Naive thymus-derived CD4-positive, alpha-beta T cell (primary cell): ENCODE measurements at regions of chr4 and their contacts with region 1.

Region 1: GRCh38 chr4:55554453-55555030 is 7.8 kb upstream of the CLOCK start:
- DNase-seq: peak in 5 of 9 donors; percentile 10 to 46 (median 36)
- ATAC-seq: peak; percentile 48
- H3K4me3 ChIP-seq: no peak overlapping the region
- H3K4me3 Mint-ChIP-seq: no peak overlapping the region
- H3K27ac ChIP-seq: no peak overlapping the region
- H3K27ac Mint-ChIP-seq: no peak overlapping the region
- H3K4me1 ChIP-seq: no peaks in the 10 kb centered on the region
- H3K4me1 Mint-ChIP-seq: peaks cover 0 to 10% (median 6%) of the 10 kb centered on the region in 7 donors
- H3K27me3 ChIP-seq: no peaks in the 10 kb centered on the region
- H3K27me3 Mint-ChIP-seq: peaks cover 0 to 15% (median 11%) of the 10 kb centered on the region in 5 donors

Region 2: DNA sequence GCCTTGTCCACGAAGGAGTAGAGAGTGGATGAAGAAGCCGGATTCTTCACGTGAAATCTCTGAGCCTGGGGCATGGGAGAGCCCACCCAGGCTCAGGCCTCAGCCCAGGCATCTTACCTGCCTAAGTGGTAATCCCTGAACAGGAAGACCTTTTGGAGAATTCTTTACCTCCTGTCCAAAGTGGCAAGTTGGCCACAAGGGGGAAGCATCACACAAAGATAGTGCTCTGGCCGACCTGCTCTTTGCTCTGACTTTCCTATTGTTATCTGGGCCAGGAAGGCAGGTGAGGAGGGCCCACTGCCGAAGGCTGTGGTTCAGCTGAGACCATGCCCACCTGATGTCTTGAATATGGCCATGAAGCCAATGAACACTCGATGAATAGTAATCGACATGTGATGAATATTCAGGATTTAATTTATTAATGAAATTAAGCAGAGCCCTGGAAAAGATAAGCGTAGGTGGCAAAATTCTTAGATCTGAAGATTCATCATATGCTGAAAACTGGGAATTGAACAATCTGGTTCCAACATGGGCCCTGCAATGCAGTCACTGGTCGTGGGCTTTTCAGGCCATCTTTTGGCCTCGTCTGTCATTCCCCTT is 1231.6 kb before region 1 on chr4:
- CTCF ChIA-PET with region 1: no interaction called
- POLR2A ChIA-PET with region 1: no interaction called
- intact Hi-C with region 1: loop called in 1 of 2 experiments (anchors 2 kb)
- DNase-seq: peak in 8 of 9 donors; percentile 8 to 52 (median 42)
- ATAC-seq: peak; percentile 54
- H3K4me3 ChIP-seq: no peak overlapping the region
- H3K4me3 Mint-ChIP-seq: no peak overlapping the region
- H3K27ac ChIP-seq: no peak overlapping the region
- H3K27ac Mint-ChIP-seq: no peak overlapping the region
- H3K4me1 ChIP-seq: no peaks in the 10 kb centered on the region
- H3K4me1 Mint-ChIP-seq: peaks cover 0 to 12% (median 0%) of the 10 kb centered on the region in 7 donors
- H3K27me3 ChIP-seq: no peaks in the 10 kb centered on the region
- H3K27me3 Mint-ChIP-seq: peaks cover 0 to 3% (median 0%) of the 10 kb centered on the region in 5 donors

Region 3: GRCh38 chr4:55312489-55313101 is 241.9 kb before region 1 on chr4:
- CTCF ChIA-PET with region 1: interaction called, 6 read pairs
- POLR2A ChIA-PET with region 1: no interaction called
- intact Hi-C with region 1: loop called (anchors 1 kb)
- DNase-seq: peak in 7 of 9 donors; percentile 6 to 34 (median 30)
- ATAC-seq: peak; percentile 68
- H3K4me3 ChIP-seq: no peak overlapping the region
- H3K4me3 Mint-ChIP-seq: no peak overlapping the region
- H3K27ac ChIP-seq: no peak overlapping the region
- H3K27ac Mint-ChIP-seq: no peak overlapping the region
- H3K4me1 ChIP-seq: no peaks in the 10 kb centered on the region
- H3K4me1 Mint-ChIP-seq: peaks cover 0 to 4% (median 0%) of the 10 kb centered on the region in 7 donors
- H3K27me3 ChIP-seq: no peaks in the 10 kb centered on the region
- H3K27me3 Mint-ChIP-seq: peaks cover 0 to 7% (median 0%) of the 10 kb centered on the region in 5 donors

Region 4: GRCh38 chr4:55358668-55359067 is 195.9 kb before region 1 on chr4:
- CTCF ChIA-PET with region 1: no interaction called
- POLR2A ChIA-PET with region 1: no interaction called
- intact Hi-C with region 1: loop called in 1 of 2 experiments (anchors 1 kb)
- DNase-seq: no peak
- ATAC-seq: peak; percentile 57
- H3K4me3 ChIP-seq: no peak overlapping the region
- H3K4me3 Mint-ChIP-seq: no peak overlapping the region
- H3K27ac ChIP-seq: no peak overlapping the region
- H3K27ac Mint-ChIP-seq: no peak overlapping the region
- H3K4me1 ChIP-seq: no peaks in the 10 kb centered on the region
- H3K4me1 Mint-ChIP-seq: peaks cover 0 to 15% (median 0%) of the 10 kb centered on the region in 7 donors
- H3K27me3 ChIP-seq: no peaks in the 10 kb centered on the region
- H3K27me3 Mint-ChIP-seq: no peaks in the 10 kb centered on the region

Region 5: DNA sequence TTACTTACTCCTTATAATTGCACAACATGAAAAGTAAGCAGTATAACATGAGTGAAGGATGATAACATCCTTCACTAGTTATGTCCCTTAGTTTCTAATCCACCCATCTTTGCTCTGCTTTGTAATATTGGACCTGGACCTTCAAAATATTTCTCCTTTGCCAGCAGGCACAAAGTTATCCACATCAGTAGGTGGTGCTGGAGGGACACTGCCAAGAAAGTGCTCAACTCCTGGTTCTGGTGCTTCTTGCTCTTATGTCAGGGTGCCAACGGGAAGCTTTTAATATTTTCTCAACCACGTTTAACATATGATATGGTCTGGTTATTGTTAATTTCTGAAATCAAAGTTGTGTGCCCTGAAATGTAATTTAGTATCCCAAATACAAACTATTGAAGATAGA is 109.7 kb before region 1 on chr4:
- CTCF ChIA-PET with region 1: interaction called, 7 read pairs
- POLR2A ChIA-PET with region 1: no interaction called
- intact Hi-C with region 1: loop called in 1 of 2 experiments (anchors 1 kb)
- DNase-seq: peak in 1 of 9 donors; percentile 7
- ATAC-seq: no peak
- H3K4me3 ChIP-seq: no peak overlapping the region
- H3K4me3 Mint-ChIP-seq: no peak overlapping the region
- H3K27ac ChIP-seq: no peak overlapping the region
- H3K27ac Mint-ChIP-seq: peak overlapping the region in 1 of 9 donors; percentile 51
- H3K4me1 ChIP-seq: no peaks in the 10 kb centered on the region
- H3K4me1 Mint-ChIP-seq: peaks cover 0 to 15% (median 11%) of the 10 kb centered on the region in 7 donors
- H3K27me3 ChIP-seq: no peaks in the 10 kb centered on the region
- H3K27me3 Mint-ChIP-seq: no peaks in the 10 kb centered on the region

Region 6: DNA sequence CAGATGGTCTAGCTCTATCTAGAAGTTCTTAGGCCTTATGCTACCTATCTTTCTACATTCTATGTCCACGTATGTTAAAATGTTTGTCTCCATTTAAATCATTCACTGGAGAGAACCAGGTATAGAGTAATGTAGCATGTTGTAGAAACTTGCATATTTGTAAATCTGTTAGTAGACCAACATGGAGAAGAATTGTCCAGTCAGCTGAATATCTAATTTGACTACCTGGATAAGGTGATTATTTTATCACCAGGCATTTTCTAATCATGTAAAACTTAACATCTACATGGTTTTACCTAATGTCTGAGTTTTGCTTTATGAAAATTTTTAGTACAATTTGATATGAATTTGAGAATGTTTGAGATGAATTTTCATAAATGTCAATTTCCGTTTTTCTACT is 1372.7 kb after region 1 on chr4:
- CTCF ChIA-PET with region 1: no interaction called
- POLR2A ChIA-PET with region 1: no interaction called
- intact Hi-C with region 1: no loop called
- DNase-seq: no peak
- ATAC-seq: no peak
- H3K4me3 ChIP-seq: no peak overlapping the region
- H3K4me3 Mint-ChIP-seq: no peak overlapping the region
- H3K27ac ChIP-seq: no peak overlapping the region
- H3K27ac Mint-ChIP-seq: no peak overlapping the region
- H3K4me1 ChIP-seq: peaks cover 0 to 4% of the 10 kb centered on the region in 2 donors
- H3K4me1 Mint-ChIP-seq: peaks cover 17 to 42% (median 34%) of the 10 kb centered on the region in 7 donors
- H3K27me3 ChIP-seq: no peaks in the 10 kb centered on the region
- H3K27me3 Mint-ChIP-seq: no peaks in the 10 kb centered on the region